Thyroid gland (tissue), 4 donors: ENCODE measurements at regions of chr12 and their contacts with region 1.

Region 1: DNA sequence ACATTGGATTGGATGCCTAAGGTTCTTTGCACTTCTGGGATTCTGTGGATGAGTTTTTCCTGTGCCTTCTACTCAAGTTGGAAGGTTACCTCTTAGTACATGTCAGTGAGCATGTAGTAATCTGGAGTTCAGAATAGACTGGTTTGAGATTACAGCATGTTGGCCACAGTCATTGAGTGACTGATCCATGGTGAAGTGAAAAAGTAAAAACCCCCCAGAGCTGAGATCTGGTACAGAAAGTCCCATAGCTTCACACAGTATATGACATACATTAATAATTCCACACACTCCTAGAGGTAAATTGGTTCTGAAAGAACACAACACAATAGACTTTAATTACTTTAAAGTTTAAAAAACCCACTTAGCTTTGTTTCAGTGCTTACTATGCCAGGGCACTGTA is 11.9 kb upstream of the CCND2 start:
- DNase-seq: no peak
- H3K4me3 ChIP-seq: no peak overlapping the region
- H3K27ac ChIP-seq: no peak overlapping the region
- H3K4me1 ChIP-seq: no peaks in the 10 kb centered on the region
- H3K27me3 ChIP-seq: no peaks in the 10 kb centered on the region
- CTCF ChIP-seq: no peak
- POLR2A ChIP-seq: no peak

Region 2: GRCh38 chr12:4112734-4113325 is 148.8 kb before region 1 on chr12:
- intact Hi-C with region 1: loop called (anchors 5 kb)
- DNase-seq: no peak
- H3K4me3 ChIP-seq: no peak overlapping the region
- H3K27ac ChIP-seq: no peak overlapping the region
- H3K4me1 ChIP-seq: peaks cover 2 to 4% of the 10 kb centered on the region in 2 donors
- H3K27me3 ChIP-seq: peaks cover 4% of the 10 kb centered on the region
- CTCF ChIP-seq: no peak
- POLR2A ChIP-seq: no peak